Head of caudate nucleus (tissue), 42 donors: ENCODE measurements at regions of chr2 and their contacts with region 1.

Region 1: DNA sequence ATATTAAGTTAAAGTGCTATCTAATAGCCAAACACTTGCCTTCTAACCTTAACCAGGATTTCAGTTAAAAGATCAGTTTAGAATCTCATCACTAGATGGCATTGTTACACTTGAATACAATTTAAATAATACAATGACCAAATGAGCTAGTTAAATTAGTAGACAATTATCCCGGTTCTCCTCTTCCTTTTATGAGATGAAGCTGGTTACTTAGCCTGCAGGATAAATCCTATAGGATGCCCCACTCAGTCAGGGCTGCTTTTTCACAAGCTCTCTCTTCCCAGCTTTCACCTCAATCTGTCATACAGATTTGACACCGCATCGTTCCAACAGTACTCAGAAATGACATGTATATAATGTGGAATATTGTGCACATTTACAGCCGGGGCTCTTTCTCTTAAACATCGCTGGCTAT is 678.8 kb downstream of the KCNJ3 start:
- DNase-seq: no peak

Region 2: DNA sequence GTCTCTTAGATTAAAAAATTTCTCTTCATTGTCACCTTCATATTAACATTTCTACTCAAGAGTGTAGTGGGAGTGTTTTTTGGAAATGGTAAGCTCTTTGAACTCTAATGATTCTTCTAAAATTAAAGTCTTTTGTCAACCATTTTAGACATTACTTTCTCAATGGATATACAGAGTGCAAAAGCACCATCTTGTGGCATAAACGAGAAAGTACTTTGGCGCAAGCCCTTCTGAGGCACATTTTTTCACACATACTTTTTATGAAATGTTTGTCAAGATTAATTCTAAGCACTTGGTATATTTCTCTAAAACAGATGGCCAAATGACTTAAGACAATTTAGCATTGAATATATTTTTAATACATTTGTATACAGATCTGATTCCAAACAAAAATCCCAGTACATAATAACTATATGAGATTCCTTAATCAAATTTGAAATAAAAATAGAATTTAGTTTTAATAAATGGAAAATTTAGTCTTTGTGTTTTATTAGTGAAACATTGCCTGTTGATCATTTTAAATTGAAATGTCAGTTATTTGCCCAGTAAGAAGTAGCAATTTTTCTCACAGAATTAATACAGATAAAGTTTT is 1816.9 kb after region 1 on chr2:
- intact Hi-C with region 1: loop called (anchors 10 kb)
- DNase-seq: peak in 26 of 42 donors; percentile 2 to 73 (median 40)